PC-3 (cell line): ENCODE measurements at regions of chr7 and their contacts with region 1.

Region 1: DNA sequence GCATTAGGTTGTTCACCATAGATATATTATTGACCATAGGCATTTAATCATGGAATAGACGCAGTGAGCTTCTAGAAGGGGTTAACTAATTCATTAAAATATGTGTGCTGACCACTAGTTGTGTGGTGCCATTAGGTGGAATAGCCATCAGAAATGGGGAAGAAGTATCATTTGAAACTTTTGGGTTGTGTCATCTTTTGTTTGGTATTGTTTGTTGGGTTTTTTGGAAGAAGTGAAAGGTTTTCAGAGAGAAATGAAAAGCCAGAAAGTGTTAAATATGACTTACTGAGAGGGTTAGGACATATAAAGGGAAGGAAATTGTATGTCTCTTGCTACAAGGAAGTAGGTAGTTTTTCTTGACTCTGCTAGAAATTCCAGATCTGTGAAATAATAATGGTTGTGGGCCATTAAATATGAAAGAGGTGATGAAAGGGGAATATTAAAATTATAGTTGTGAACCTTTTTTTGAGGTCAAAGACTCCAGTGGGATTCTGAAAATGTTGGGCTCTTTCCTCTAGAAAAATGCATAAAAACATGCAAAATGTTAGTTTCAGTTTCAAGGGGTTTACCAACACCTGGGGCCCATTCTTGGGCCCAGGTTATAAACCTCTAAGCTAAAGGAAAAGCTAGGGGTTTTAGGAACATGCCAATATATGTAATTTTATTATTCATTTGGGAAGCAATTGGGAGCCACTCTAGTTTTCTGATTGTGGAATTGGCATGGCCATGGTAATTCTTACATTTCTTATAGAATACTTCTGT is 348.5 kb downstream of the BBS9 start:
- DNase-seq: no peak
- ATAC-seq: no peak
- H3K4me3 ChIP-seq: no peak overlapping the region
- H3K27ac ChIP-seq: no peak overlapping the region
- H3K4me1 ChIP-seq: no peaks in the 10 kb centered on the region
- H3K27me3 ChIP-seq: no peaks in the 10 kb centered on the region
- CTCF ChIP-seq: no peak

Region 2: DNA sequence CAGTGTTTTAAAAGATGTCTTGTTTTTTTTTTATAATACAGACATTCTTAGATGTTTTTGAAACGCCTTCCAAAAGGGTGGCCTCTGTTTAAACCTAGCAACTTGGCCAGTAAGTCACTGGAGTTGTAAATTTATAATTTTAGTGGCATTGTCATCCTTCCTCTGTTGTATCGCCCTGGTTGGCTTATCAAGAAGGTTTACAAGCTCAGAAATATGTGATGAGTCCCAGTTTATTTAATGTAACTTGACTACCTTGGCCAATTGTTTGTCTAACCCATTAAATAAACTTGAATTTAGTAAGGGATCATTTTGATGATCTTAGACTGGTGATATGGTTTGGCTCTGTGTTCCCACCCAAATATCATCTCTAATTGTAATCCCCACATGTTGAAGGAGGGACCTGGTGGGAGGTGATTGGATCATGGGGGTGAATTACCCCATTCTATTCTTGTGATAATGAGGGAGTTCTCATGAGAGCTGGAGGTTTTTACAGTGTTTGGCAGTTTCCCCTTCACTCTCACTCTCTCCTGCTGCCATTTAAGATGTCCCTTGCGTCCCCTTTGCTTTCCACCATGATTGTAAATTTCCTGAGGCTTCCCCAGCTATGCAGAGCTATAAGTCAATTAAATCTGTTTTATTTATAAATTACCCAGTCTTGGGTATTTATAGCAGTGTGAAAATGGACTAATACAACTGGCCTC is 401.9 kb before region 1 on chr7:
- CTCF ChIA-PET with region 1: no interaction called
- POLR2A ChIA-PET with region 1: interaction called, 27 read pairs
- intact Hi-C with region 1: no loop called
- DNase-seq: peak; percentile 59
- ATAC-seq: peak; percentile 86
- H3K4me3 ChIP-seq: no peak overlapping the region
- H3K27ac ChIP-seq: no peak overlapping the region
- H3K4me1 ChIP-seq: peaks cover 21% of the 10 kb centered on the region
- H3K27me3 ChIP-seq: no peaks in the 10 kb centered on the region
- CTCF ChIP-seq: no peak